Natural killer cell (primary cell): ENCODE measurements at regions of chr2 and their contacts with region 1.

Region 1: GRCh38 chr2:191081411-191082155 is 67.6 kb upstream of the STAT1 start:
- DNase-seq: no peak
- ATAC-seq: peak in 1 of 3 donors; percentile 25
- H3K4me3 ChIP-seq: no peak overlapping the region
- H3K4me3 Mint-ChIP-seq: no peak overlapping the region
- H3K27ac ChIP-seq: no peak overlapping the region
- H3K27ac Mint-ChIP-seq: peak overlapping the region; percentile 17 to 84
- H3K4me1 ChIP-seq: no peaks in the 10 kb centered on the region
- H3K4me1 Mint-ChIP-seq: peaks cover 47 to 62% of the 10 kb centered on the region in 2 donors
- H3K27me3 ChIP-seq: no peaks in the 10 kb centered on the region
- H3K27me3 Mint-ChIP-seq: no peaks in the 10 kb centered on the region
- CTCF ChIP-seq: no peak

Region 2: GRCh38 chr2:190947711-190948251 is 133.8 kb before region 1 on chr2:
- intact Hi-C with region 1: no loop called
- DNase-seq: peak in 1 of 2 donors; percentile 67
- ATAC-seq: peak; percentile 77 to 88 (median 81)
- H3K4me3 ChIP-seq: no peak overlapping the region
- H3K4me3 Mint-ChIP-seq: peak overlapping the region; percentile 32
- H3K27ac ChIP-seq: peak overlapping the region; percentile 54
- H3K27ac Mint-ChIP-seq: no peak overlapping the region
- H3K4me1 ChIP-seq: peaks cover 3% of the 10 kb centered on the region
- H3K4me1 Mint-ChIP-seq: no peaks in the 10 kb centered on the region
- H3K27me3 ChIP-seq: no peaks in the 10 kb centered on the region
- H3K27me3 Mint-ChIP-seq: no peaks in the 10 kb centered on the region
- CTCF ChIP-seq: peak; percentile 10

Region 3: DNA sequence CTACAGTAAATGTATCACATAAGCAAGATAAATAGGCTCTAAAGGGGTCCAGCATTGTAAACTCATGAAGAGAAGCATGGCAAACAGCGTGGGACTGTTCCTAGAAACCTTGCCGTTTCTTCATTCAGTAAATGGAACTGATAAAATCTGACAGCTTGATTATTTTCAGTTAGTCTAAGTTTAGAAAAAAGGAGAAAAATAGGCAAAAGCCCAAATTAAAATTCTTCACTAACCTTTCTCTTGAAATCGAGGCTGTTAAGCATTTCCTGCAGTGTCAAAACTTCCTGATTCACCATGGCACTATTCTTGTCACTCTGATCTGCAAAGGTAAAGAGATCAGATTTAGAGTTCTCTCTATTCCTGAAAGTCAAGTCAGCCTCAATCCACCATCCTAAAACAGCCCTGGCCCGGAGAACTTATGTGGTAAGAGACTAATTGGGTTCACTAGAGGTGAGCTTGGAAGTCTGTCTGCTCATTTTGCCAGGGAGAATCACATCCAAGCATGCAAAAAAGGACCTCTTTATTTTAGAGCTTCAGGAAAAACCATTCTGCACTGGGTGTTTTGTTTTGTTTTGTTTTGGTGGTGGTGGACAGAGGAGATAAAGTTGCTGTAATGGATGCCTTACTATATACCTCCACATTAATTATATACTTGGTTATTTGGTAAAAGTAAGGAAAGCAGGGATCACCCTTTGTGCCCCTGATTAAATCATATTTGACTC is 15.2 kb before region 1 on chr2:
- intact Hi-C with region 1: loop called (anchors 2 kb)
- DNase-seq: peak in 1 of 2 donors; percentile 42
- ATAC-seq: peak; percentile 27 to 38 (median 29)
- H3K4me3 ChIP-seq: no peak overlapping the region
- H3K4me3 Mint-ChIP-seq: peak overlapping the region; percentile 85
- H3K27ac ChIP-seq: peak overlapping the region; percentile 83
- H3K27ac Mint-ChIP-seq: peak overlapping the region; percentile 83 to 94
- H3K4me1 ChIP-seq: peaks cover 22% of the 10 kb centered on the region
- H3K4me1 Mint-ChIP-seq: peaks cover 79 to 82% of the 10 kb centered on the region in 2 donors
- H3K27me3 ChIP-seq: no peaks in the 10 kb centered on the region
- H3K27me3 Mint-ChIP-seq: no peaks in the 10 kb centered on the region
- CTCF ChIP-seq: no peak